ENCODE measurements at regions of chrX and their contacts with region 1.

Region 1: GRCh38 chrX:66012094-66012534 is 27.8 kb downstream of the VSIG4 start:
- DNase-seq: peak; percentile 16
- H3K4me3 Mint-ChIP-seq: peak overlapping the region; percentile 26
- H3K27ac Mint-ChIP-seq: peak overlapping the region; percentile 83
- H3K4me1 Mint-ChIP-seq: peaks cover 58% of the 10 kb centered on the region
- H3K27me3 Mint-ChIP-seq: no peaks in the 10 kb centered on the region

Region 2: DNA sequence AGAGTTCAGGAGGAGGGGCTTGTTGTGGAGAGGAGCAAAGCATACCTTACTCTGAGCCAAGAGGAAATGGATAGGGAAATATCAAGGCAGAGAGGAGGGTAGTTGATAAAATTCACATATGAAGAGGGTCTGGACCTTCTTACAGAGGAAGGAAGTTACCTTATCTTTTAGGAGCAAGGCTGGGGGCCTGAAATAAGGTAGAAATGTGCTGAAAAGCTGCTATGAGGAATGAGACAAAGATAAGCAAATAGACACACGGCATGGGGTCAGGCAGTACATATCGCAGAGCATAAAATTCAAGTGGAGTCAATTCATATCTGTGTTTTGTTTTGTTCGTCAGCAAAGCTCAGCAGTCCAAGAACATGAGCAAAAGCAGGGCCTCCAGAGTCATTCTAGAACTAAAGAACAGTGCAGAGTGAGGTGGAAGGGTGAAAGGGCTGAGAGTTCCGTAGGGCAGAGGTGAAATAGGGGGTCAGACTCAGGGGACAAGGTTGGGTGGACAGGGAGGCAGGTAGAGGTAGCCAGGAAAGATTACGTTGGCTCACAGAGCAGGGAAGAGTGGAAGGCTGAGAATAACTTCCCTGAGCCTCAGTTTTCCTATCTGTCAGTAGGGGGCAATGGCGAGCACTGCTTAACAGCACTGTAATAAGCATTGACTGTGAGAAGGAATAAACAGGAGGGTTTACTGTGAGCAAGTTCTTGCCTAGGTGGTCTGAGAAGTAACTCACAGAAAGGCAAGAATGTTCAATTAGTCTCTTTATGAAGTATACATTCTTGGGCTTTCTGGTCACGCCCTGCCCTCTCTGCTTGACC is 18.6 kb after region 1 on chrX:
- intact Hi-C with region 1: loop called (anchors 2 kb)
- DNase-seq: no peak
- H3K4me3 Mint-ChIP-seq: no peak overlapping the region
- H3K27ac Mint-ChIP-seq: no peak overlapping the region
- H3K4me1 Mint-ChIP-seq: peaks cover 6% of the 10 kb centered on the region
- H3K27me3 Mint-ChIP-seq: no peaks in the 10 kb centered on the region

Region 3: GRCh38 chrX:67563469-67564448 is 1551.6 kb after region 1 on chrX:
- intact Hi-C with region 1: no loop called
- DNase-seq: no peak
- H3K4me3 Mint-ChIP-seq: no peak overlapping the region
- H3K27ac Mint-ChIP-seq: no peak overlapping the region
- H3K4me1 Mint-ChIP-seq: no peaks in the 10 kb centered on the region
- H3K27me3 Mint-ChIP-seq: no peaks in the 10 kb centered on the region